OCI-LY7 (cell line): ENCODE measurements at regions of chr6 and their contacts with region 1.

Region 1: DNA sequence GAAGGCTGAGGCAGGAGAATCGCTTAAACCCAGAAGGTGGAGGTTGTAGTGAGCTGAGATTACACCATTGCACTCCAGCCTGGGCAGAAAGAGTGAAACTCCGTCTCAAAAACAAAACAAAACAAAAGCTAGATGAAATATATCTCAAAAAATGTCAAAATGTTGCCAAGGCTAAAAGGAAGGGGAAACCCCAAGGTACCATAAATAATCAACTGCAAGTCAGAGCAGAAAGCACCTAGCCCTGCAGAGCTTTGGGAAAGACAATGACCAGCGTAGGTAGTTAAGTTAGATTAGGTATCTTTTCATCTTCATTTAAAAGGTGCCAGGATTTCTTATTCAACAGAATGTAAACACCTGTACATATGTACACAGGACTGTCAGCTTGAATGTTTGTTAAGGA is 33.0 kb downstream of the AKIRIN2 start:
- DNase-seq: no peak
- H3K4me3 ChIP-seq: no peak overlapping the region
- H3K27ac ChIP-seq: no peak overlapping the region
- H3K4me1 ChIP-seq: peaks cover 6% of the 10 kb centered on the region
- CTCF ChIP-seq: no peak

Region 2: DNA sequence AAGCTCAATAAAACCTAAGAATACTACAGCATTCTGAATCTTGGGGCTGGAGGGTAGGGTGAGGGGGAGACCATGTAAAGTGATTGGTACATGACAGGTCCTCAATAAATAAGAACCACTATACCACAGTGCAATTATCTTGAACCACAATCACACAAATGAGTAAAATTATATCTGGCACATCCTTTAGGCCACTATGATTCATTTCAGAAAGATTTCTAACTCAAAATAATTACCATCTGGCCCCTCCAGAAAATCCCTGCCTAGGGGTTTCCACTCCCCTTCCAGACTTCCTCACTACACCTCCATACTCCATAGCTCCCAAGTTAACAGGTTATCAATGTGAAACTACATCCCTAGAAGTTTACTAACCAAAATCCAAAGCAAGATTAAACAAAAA is 13.3 kb after region 1 on chr6:
- CTCF ChIA-PET with region 1: no interaction called
- POLR2A ChIA-PET with region 1: interaction called, 13 read pairs
- intact Hi-C with region 1: no loop called
- DNase-seq: no peak
- H3K4me3 ChIP-seq: no peak overlapping the region
- H3K27ac ChIP-seq: no peak overlapping the region
- H3K4me1 ChIP-seq: no peaks in the 10 kb centered on the region
- CTCF ChIP-seq: no peak

Region 3: GRCh38 chr6:87742106-87742505 is 73.1 kb after region 1 on chr6:
- CTCF ChIA-PET with region 1: no interaction called
- POLR2A ChIA-PET with region 1: no interaction called
- intact Hi-C with region 1: no loop called
- DNase-seq: peak; percentile 71
- H3K4me3 ChIP-seq: no peak overlapping the region
- H3K27ac ChIP-seq: no peak overlapping the region
- H3K4me1 ChIP-seq: peaks cover 13% of the 10 kb centered on the region
- CTCF ChIP-seq: no peak

Region 4: GRCh38 chr6:87929843-87930288 is 260.8 kb after region 1 on chr6:
- CTCF ChIA-PET with region 1: no interaction called
- POLR2A ChIA-PET with region 1: no interaction called
- intact Hi-C with region 1: no loop called
- DNase-seq: peak; percentile 95
- H3K4me3 ChIP-seq: peak overlapping the region; percentile 10
- H3K27ac ChIP-seq: peak overlapping the region; percentile 99
- H3K4me1 ChIP-seq: peaks cover 91% of the 10 kb centered on the region
- CTCF ChIP-seq: peak; percentile 98